Sigmoid colon (tissue), 7 donors: ENCODE measurements at regions of chr10 and their contacts with region 1.

Region 1: DNA sequence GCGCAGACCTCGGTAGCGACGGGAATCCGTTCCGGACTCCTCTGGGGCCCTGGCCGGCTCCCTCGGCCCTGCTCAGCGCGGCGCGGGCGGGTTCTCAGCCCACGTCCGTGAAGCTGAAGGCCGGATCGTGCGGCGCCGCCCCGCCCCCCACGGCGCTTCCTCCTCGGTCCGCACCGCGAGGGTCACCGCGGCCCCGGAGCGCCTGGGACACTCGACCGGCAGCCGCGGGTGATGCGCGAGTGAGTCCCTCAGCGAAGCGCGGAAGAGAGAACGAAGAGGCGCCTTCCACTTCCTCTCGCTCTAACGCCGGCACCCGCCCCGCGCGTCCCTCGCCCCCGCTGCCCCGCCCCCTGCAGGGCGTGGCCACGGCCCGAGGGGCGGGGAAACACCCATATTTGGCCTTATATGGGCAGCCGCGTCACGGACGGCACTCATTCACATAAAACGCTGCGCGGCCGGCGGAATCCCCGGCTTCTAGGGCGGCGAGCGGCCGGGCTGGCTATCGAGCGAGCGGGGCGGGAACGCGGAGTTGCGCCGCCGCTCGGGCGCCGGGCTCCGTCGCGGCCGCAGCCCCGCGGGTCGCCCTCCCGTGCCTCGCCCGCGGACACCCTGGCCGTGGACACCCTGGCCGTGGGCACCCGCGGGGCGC is at the start of gene DUSP5:
- DNase-seq: peak; percentile 97
- H3K4me3 ChIP-seq: peak within 1 kb of the TSS; percentile 64 to 83 (median 77)
- H3K27ac ChIP-seq: peak within 1 kb of the TSS; percentile 96 to 98 (median 97)
- H3K4me1 ChIP-seq: peaks cover 0 to 79% (median 61%) of the 10 kb centered on the region in 4 donors
- H3K27me3 ChIP-seq: no peaks in the 10 kb centered on the region
- CTCF ChIP-seq: no peak
- EP300 ChIP-seq: peak in 1 of 4 donors; percentile 37
- POLR2A ChIP-seq: peak; percentile 80 to 93
- total RNA-seq, gene DUSP5: 3.6 to 42.1 (median 7.6) TPM

Region 2: DNA sequence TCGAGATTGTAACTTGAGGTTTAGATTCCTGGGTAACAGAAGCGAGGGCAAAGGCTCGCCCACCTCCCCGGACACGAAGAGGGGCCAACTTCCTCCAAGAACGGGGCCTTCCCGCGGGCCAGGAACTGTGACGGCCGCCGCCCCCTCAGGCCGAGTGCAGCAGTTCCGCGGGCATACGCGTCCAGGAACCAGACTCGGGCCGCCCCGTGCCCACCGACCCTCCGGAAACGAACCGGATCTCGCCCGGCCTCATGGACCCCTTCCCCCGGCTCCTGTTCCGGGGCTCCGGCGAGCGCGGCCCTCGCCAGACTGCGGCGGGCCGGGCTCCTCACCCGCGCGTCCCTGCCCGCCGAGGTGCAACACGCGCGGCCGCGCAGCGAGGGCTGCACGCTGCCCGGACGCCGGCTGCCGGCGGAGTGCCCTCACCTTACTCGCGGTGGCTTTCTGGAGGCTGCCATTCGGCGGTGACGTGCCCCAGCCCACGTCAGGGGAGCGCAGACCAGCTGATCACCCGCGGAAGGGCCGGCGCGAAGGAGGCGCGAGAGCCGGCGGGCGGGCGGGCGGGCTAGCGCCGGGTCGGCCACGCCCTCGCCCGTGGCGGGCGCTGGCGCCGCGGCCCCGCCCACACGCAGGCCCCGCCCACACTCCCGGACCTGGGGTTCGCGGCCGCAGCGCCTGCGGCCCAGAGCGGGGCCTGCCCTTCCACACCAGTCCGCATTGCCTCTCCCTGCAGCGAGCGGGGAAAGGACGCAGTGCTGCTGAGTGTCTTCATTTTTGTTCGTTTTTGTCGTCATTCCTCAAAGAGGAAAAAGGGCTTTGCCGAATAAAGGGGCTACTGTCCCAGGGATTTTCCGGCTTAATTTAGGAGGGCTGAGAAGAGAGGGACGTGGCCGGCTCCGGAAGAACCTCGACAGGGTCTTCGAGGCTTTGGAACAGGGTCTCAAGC is 574.3 kb before region 1 on chr10 and contains the start of gene XPNPEP1:
- intact Hi-C with region 1: loop called (anchors 5 kb)
- DNase-seq: peak; percentile 95
- H3K4me3 ChIP-seq: peak within 1 kb of the TSS; percentile 44 to 98 (median 93)
- H3K27ac ChIP-seq: peak within 1 kb of the TSS; percentile 86 to 97 (median 92)
- H3K4me1 ChIP-seq: peaks cover 0 to 28% (median 19%) of the 10 kb centered on the region in 4 donors
- H3K27me3 ChIP-seq: no peaks in the 10 kb centered on the region
- CTCF ChIP-seq: no peak
- EP300 ChIP-seq: no peak
- POLR2A ChIP-seq: peak; percentile 16 to 61
- total RNA-seq, gene XPNPEP1: 53.5 to 59.1 (median 56.5) TPM

Region 3: GRCh38 chr10:110225756-110226542 is 271.6 kb before region 1 on chr10:
- intact Hi-C with region 1: loop called (anchors 5 kb)
- DNase-seq: peak; percentile 97
- H3K4me3 ChIP-seq: peak overlapping the region; percentile 76 to 87 (median 83)
- H3K27ac ChIP-seq: peak overlapping the region; percentile 92 to 98 (median 96)
- H3K4me1 ChIP-seq: peaks cover 0 to 57% (median 43%) of the 10 kb centered on the region in 4 donors
- H3K27me3 ChIP-seq: no peaks in the 10 kb centered on the region
- CTCF ChIP-seq: peak; percentile 57 to 65 (median 62)
- EP300 ChIP-seq: peak in 1 of 4 donors; percentile 29
- POLR2A ChIP-seq: no peak

Region 4: DNA sequence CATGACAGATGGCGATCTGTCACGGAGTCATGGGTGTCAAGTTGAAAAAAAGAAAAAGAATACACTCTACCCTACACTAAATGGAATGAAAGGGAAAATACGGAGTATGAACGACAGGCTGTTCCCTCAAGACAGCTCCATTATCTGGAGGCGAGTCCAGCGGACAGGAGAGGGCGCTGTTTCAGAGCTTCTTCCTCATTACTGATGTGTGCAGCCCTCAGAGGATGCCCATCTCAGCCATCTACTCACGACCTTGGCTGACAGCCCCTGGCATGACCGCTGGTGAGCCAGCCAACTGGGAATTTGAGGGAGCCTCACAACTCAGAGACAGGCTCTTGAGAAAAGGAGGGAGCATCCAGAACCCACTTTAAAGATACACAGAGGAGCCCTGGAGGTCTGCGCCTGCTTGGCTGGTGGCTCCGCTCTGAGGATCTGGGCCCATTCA is 143.2 kb before region 1 on chr10:
- intact Hi-C with region 1: loop called (anchors 2 kb)
- DNase-seq: peak; percentile 81
- H3K4me3 ChIP-seq: no peak overlapping the region
- H3K27ac ChIP-seq: peak overlapping the region in 2 of 4 donors; percentile 49 to 68
- H3K4me1 ChIP-seq: peaks cover 0 to 58% (median 45%) of the 10 kb centered on the region in 4 donors
- H3K27me3 ChIP-seq: no peaks in the 10 kb centered on the region
- CTCF ChIP-seq: peak; percentile 30 to 67 (median 56)
- EP300 ChIP-seq: no peak
- POLR2A ChIP-seq: no peak

Region 5: DNA sequence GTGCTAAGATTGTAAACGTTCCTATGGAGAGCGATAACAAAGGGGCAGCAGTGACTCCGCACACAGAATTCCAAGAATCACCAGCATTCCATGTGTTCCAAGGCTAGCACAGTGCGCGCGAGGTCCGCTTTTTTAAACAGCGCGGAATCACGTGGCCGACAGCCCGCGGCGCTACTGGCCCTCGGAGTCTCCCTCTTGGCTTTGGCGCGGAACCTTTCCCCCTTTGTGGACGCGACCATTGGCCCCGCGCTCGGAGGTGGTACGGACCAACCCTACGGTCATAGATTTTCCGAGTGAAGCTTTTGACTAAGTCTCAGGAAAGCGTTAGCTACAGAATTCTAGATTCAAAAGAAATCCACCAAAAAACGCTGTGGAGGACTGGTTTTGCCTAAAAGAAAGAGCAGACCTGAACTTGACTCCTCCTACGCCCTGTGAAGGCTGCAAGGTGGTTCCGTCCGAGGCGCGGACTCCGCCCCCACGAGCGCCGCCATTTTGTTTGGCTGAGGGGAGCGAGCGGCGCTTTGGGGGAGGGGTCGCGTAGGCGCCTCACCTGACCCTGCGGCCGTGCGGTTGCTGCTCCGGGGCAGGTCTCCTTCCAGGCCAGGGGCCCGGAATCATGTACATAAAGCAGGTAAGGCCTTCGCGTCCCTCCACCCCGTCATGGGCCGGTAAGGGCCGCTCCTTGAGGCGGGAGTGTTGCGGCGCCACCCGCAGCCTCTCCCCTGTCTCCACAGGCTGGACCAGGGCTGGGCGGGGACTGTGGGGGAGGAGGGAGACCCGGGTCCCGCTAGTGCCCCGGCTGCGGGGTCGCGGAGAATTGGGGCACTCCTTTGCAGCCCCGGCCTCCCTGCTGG is 69.9 kb after region 1 on chr10 and contains the start of gene SMC3:
- intact Hi-C with region 1: loop called (anchors 2 kb)
- DNase-seq: peak; percentile 95
- H3K4me3 ChIP-seq: peak within 1 kb of the TSS; percentile 68 to 99 (median 94)
- H3K27ac ChIP-seq: peak within 1 kb of the TSS; percentile 90 to 98 (median 92)
- H3K4me1 ChIP-seq: peaks cover 0 to 46% (median 42%) of the 10 kb centered on the region in 4 donors
- H3K27me3 ChIP-seq: peaks cover 0 to 5% (median 0%) of the 10 kb centered on the region in 3 donors
- CTCF ChIP-seq: no peak
- EP300 ChIP-seq: peak in 1 of 4 donors; percentile 13
- POLR2A ChIP-seq: peak; percentile 44 to 51
- total RNA-seq, gene SMC3: 27.2 to 43.5 (median 34.8) TPM